AG04450 (cell line): ENCODE measurements at regions of chr1 and their contacts with region 1.

Region 1: DNA sequence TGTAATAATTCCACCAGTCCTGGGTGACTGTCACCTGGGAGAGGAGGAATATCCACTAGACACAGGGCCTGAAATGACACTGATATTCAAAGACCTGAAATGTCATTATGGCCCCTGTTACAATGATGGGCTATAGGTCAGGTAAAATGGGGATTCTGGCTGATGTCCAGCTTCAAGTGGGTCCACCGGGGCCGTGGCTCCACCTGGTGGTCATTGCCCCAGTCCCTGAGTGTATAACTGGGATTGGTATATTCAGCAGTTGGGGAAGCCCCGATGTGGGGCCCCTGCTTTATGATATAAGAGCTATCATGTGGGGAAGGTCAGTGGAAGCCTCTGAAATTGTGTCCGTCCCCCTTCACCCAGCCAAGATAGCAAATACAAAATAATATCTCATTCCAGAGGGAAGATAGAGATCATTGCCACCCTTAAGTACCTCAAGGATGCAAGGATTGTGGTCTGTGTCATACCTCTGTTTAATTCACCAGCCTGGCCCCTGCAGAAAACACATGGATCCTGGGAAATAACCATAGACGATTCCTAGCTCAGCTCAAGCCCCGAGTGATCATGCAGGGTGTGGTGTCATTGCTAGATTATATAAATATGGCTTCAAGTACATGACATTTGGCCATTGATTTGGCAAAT is 19.4 kb downstream of the PLEKHO1 start:
- DNase-seq: no peak
- H3K4me3 ChIP-seq: no peak overlapping the region
- H3K27ac ChIP-seq: no peak overlapping the region
- H3K27me3 ChIP-seq: no peaks in the 10 kb centered on the region
- CTCF ChIP-seq: peak; percentile 89

Region 2: GRCh38 chr1:150067184-150068036 is 101.7 kb before region 1 on chr1 and contains the start of gene VPS45:
- CTCF ChIA-PET with region 1: interaction called, 238 read pairs
- POLR2A ChIA-PET with region 1: no interaction called
- DNase-seq: peak; percentile 72
- H3K4me3 ChIP-seq: peak within 1 kb of the TSS; percentile 88
- H3K27ac ChIP-seq: peak within 1 kb of the TSS; percentile 96
- H3K27me3 ChIP-seq: no peaks in the 10 kb centered on the region
- CTCF ChIP-seq: peak; percentile 30
- polyA plus RNA-seq, gene VPS45: 49.5 and 61.3 TPM in 2 replicates

Region 3: GRCh38 chr1:150072959-150073358 is 96.1 kb before region 1 on chr1:
- CTCF ChIA-PET with region 1: interaction called, 238 read pairs
- POLR2A ChIA-PET with region 1: interaction called, 3 read pairs
- DNase-seq: no peak
- H3K4me3 ChIP-seq: no peak overlapping the region
- H3K27ac ChIP-seq: no peak overlapping the region
- H3K27me3 ChIP-seq: no peaks in the 10 kb centered on the region
- CTCF ChIP-seq: peak; percentile 46

Region 4: GRCh38 chr1:150109586-150109985 is 59.5 kb before region 1 on chr1:
- CTCF ChIA-PET with region 1: no interaction called
- POLR2A ChIA-PET with region 1: no interaction called
- DNase-seq: no peak
- H3K4me3 ChIP-seq: no peak overlapping the region
- H3K27ac ChIP-seq: no peak overlapping the region
- H3K27me3 ChIP-seq: no peaks in the 10 kb centered on the region
- CTCF ChIP-seq: no peak

Region 5: DNA sequence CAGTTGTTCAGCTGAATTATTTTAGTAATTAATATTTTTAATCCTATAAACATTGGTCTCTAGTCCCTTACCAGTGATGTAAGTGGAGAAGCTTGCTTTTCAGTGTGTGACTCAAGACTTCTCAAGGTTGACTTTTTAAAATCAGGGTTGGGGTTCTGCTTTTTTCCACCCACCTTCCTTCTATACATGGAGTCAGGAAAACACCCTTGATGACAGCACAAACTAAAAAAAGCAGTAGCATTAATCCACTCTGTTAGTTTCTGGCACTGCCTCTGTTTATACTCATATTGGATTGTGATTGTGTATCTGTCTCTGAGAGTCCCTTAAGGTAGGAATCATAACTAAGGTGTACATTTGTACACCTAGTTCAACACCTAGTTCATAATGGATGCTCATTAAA is 27.6 kb before region 1 on chr1:
- CTCF ChIA-PET with region 1: interaction called, 11 read pairs
- POLR2A ChIA-PET with region 1: no interaction called
- DNase-seq: no peak
- H3K4me3 ChIP-seq: no peak overlapping the region
- H3K27ac ChIP-seq: no peak overlapping the region
- H3K27me3 ChIP-seq: no peaks in the 10 kb centered on the region
- CTCF ChIP-seq: no peak

Region 6: DNA sequence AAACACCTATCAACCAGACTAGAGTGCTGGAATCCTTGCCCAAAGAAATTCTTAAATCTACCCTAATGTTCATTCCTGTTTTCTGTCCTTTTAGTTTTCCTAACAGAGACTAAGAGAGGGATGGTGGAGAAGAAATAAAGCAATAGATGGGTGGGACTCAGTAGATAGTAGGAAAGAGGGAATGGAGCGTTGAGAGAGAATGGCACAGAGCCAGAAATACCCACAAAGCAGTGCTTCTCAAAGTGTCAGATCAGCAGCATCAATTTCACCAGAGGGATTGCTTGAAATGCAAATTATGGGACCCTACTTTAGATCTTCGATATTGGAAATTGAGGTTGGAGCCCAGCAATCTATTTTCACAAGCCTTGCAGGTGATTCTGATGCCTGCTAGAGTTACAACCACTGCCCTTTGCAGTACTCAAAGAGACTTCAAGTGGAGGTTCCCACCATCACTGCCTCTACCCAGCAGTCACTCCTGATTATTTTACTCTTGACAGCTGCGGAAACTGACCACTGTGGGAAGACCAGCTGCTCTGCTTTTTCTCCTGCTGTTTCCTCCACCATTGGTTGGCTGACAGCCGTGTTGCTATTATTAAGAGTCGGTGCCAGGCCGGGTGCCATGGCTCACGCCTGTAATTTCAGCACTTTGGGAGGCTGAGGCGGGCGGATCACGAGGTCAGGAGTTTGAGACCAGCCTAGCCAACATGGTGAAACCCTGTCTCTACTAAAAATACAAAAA is 140.9 kb after region 1 on chr1:
- CTCF ChIA-PET with region 1: no interaction called
- POLR2A ChIA-PET with region 1: no interaction called
- DNase-seq: no peak
- H3K4me3 ChIP-seq: no peak overlapping the region
- H3K27ac ChIP-seq: no peak overlapping the region
- H3K27me3 ChIP-seq: no peaks in the 10 kb centered on the region
- CTCF ChIP-seq: no peak

Region 7: GRCh38 chr1:150320667-150320978 is 151.5 kb after region 1 on chr1:
- CTCF ChIA-PET with region 1: no interaction called
- POLR2A ChIA-PET with region 1: no interaction called
- DNase-seq: no peak
- H3K4me3 ChIP-seq: peak overlapping the region; percentile 31
- H3K27ac ChIP-seq: no peak overlapping the region
- H3K27me3 ChIP-seq: no peaks in the 10 kb centered on the region
- CTCF ChIP-seq: no peak